GM12878 (cell line): ENCODE measurements at regions of chr7 and their contacts with region 1.

Region 1: DNA sequence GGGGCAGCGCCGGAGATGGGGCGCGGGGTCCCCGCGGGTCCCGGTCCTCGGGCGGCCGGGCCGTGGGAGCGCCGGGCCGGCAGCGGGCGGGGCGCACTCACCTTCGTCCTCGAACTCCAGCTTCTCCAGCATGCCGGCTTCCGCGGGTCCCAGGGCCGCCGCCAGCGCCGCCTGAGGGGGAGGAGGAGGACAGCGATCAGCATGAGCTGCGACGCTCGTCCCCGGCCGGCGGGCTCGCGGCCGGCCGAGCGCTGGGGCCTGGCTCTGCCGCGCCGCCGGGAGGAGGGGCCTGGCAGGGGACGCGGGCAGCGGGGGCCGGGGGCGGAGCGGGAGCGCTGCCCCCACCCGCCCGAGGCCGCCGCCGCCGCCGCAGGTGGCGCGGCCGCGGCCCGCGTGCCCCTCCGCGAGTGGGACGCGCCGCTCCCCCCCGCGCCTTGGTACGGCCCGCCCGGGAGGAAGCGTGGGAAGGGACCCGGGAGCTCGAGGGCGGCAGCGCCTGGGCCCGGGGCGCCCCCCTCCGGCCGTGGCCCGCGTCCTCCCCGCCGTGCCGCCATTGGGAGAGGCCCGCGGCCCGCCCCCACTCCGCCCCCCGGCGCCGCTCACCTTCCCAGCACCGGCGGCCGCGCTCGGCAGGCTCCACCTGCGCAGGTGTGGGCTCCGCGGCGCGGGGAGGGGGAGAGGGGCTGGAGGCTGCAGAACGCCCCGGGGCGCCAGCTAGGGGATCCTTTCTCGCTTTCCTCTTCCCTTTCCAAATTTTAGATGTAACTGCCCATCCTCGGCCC is 112.5 kb upstream of the RHEB start:
- DNase-seq: peak; percentile 24
- ATAC-seq: peak; percentile 85
- H3K4me3 ChIP-seq: peak overlapping the region; percentile 87
- H3K27ac ChIP-seq: peak overlapping the region; percentile 90
- H3K4me1 ChIP-seq: peaks cover 9% of the 10 kb centered on the region
- H3K27me3 ChIP-seq: no peaks in the 10 kb centered on the region; a peak in 1 of 4 replicates
- CTCF ChIP-seq: peak; percentile 21 to 67 (median 30); a peak in 4 of 6 replicates
- EP300 ChIP-seq: no peak
- POLR2A ChIP-seq: peak; percentile 78
- RAD21 ChIP-seq: peak; percentile 37; the same call in 1 of the 2 replicates

Region 2: DNA sequence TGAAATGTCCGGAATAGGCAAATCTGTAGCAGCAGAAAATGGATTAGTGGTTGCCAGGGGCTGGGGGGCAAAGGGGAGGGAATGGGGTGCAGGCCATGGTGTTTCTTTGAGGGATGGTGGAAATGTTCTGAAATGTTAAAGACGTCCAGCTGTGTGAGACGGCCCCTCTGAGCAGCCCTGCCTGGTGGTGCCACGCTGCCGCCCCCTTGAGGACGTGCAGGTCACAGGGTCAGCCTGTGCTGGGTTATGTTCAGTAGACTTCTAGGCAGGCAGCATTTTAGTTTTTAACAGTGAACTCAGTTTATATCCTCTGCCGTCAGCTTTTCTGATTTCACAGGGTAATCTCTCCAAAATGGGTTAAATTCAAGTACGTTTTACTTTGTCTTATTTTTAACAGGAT is 281.1 kb before region 1 on chr7:
- CTCF ChIA-PET with region 1: interaction called, 40 read pairs
- POLR2A ChIA-PET with region 1: interaction called, 3 read pairs
- RAD21 ChIA-PET with region 1: interaction called, 16 read pairs
- SMC1A ChIA-PET with region 1: interaction called, 6 read pairs
- in situ Hi-C with region 1: no loop called
- intact Hi-C with region 1: no loop called
- DNase-seq: no peak
- ATAC-seq: peak; percentile 76
- H3K4me3 ChIP-seq: peak overlapping the region; percentile 34; the same call in 1 of the 2 replicates
- H3K27ac ChIP-seq: peak overlapping the region; percentile 94
- H3K4me1 ChIP-seq: peaks cover 37% of the 10 kb centered on the region
- H3K27me3 ChIP-seq: no peaks in the 10 kb centered on the region
- CTCF ChIP-seq: peak; percentile 56 to 67 (median 59)
- EP300 ChIP-seq: no peak
- POLR2A ChIP-seq: no peak
- RAD21 ChIP-seq: peak; percentile 54

Region 3: GRCh38 chr7:151472644-151473380 is 159.3 kb before region 1 on chr7:
- CTCF ChIA-PET with region 1: interaction called, 6 read pairs
- POLR2A ChIA-PET with region 1: interaction called, 6 read pairs
- RAD21 ChIA-PET with region 1: interaction called, 29 read pairs
- SMC1A ChIA-PET with region 1: interaction called, 4 read pairs
- in situ Hi-C with region 1: no loop called
- intact Hi-C with region 1: loop called (anchors 5 kb)
- DNase-seq: peak; percentile 83
- ATAC-seq: peak; percentile 77
- H3K4me3 ChIP-seq: peak overlapping the region; percentile 54
- H3K27ac ChIP-seq: peak overlapping the region; percentile 96
- H3K4me1 ChIP-seq: peaks cover 45% of the 10 kb centered on the region
- H3K27me3 ChIP-seq: no peaks in the 10 kb centered on the region
- CTCF ChIP-seq: peak in 2 of 3 experiments; percentile 5 to 7; a peak in 2 of 6 replicates
- EP300 ChIP-seq: peak; percentile 76 to 90; a peak in 3 of 4 replicates
- POLR2A ChIP-seq: peak; percentile 25; the same call in 1 of the 2 replicates
- RAD21 ChIP-seq: no peak

Region 4: DNA sequence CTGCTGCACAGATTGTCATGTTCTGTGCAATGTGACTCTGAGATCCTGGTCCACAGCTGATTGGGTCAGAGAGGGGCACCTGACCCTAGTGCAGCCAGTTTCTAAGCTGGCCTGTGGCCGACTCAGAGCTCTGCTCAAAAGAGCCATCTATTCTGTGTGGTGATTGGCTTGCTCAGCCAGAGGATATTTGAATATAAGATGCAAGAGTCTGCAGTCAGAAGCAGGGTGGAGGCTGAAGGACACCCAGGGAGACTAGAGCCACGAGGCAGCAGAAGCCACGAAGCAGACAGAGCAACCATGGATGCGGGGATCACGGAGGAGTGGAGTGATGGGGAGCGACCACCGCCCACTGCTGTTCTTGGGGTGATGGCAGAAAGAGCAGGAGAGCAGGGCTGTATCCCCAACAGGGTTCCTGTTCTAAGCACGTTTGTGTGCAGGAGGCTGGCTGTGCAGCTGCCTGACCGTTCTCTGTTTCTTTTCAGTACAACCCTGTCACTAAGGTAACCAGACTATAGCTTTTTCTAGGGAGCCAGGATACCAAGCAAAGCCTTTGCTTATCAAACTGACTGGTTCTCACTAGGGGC is 93.0 kb before region 1 on chr7:
- CTCF ChIA-PET with region 1: interaction called, 3 read pairs
- POLR2A ChIA-PET with region 1: interaction called, 11 read pairs
- RAD21 ChIA-PET with region 1: interaction called, 17 read pairs
- SMC1A ChIA-PET with region 1: interaction called, 5 read pairs
- in situ Hi-C with region 1: no loop called
- intact Hi-C with region 1: no loop called
- DNase-seq: no peak
- ATAC-seq: peak; percentile 99
- H3K4me3 ChIP-seq: no peak overlapping the region
- H3K27ac ChIP-seq: no peak overlapping the region
- H3K4me1 ChIP-seq: no peaks in the 10 kb centered on the region
- H3K27me3 ChIP-seq: no peaks in the 10 kb centered on the region
- CTCF ChIP-seq: no peak
- EP300 ChIP-seq: no peak
- POLR2A ChIP-seq: no peak
- RAD21 ChIP-seq: no peak

Region 5: GRCh38 chr7:151665368-151665767 is 33.2 kb after region 1 on chr7:
- CTCF ChIA-PET with region 1: no interaction called
- POLR2A ChIA-PET with region 1: no interaction called
- RAD21 ChIA-PET with region 1: no interaction called
- SMC1A ChIA-PET with region 1: no interaction called
- in situ Hi-C with region 1: no loop called
- intact Hi-C with region 1: no loop called
- DNase-seq: no peak
- ATAC-seq: no peak
- H3K4me3 ChIP-seq: no peak overlapping the region
- H3K27ac ChIP-seq: no peak overlapping the region
- H3K4me1 ChIP-seq: no peaks in the 10 kb centered on the region
- H3K27me3 ChIP-seq: no peaks in the 10 kb centered on the region; a peak in 1 of 4 replicates
- CTCF ChIP-seq: no peak
- EP300 ChIP-seq: no peak
- POLR2A ChIP-seq: no peak
- RAD21 ChIP-seq: no peak

Region 6: GRCh38 chr7:151705636-151706276 is 73.6 kb after region 1 on chr7:
- CTCF ChIA-PET with region 1: interaction called, 7 read pairs
- POLR2A ChIA-PET with region 1: no interaction called
- RAD21 ChIA-PET with region 1: no interaction called
- SMC1A ChIA-PET with region 1: interaction called, 7 read pairs
- in situ Hi-C with region 1: no loop called
- intact Hi-C with region 1: loop called (anchors 5 kb)
- DNase-seq: no peak
- ATAC-seq: peak; percentile 85
- H3K4me3 ChIP-seq: no peak overlapping the region
- H3K27ac ChIP-seq: no peak overlapping the region
- H3K4me1 ChIP-seq: no peaks in the 10 kb centered on the region
- H3K27me3 ChIP-seq: no peaks in the 10 kb centered on the region; a peak in 1 of 4 replicates
- CTCF ChIP-seq: peak; percentile 44 to 52 (median 46); a peak in 5 of 6 replicates
- EP300 ChIP-seq: no peak
- POLR2A ChIP-seq: no peak
- RAD21 ChIP-seq: peak; percentile 37; the same call in 1 of the 2 replicates